Common myeloid progenitor, CD34-positive (primary cell): ENCODE measurements at regions of chr15 and their contacts with region 1.

Region 1: GRCh38 chr15:45205192-45205591 is 17.4 kb upstream of the SHF start:
- DNase-seq: peak; percentile 69 to 82 (median 77)
- H3K4me3 ChIP-seq: no peak overlapping the region
- H3K27ac ChIP-seq: no peak overlapping the region
- H3K4me1 ChIP-seq: peaks cover 4 to 20% (median 10%) of the 10 kb centered on the region in 4 experiments
- H3K27me3 ChIP-seq: no peaks in the 10 kb centered on the region

Region 2: GRCh38 chr15:44636976-44637375 is 568.2 kb before region 1 on chr15:
- CTCF ChIA-PET with region 1: no interaction called
- POLR2A ChIA-PET with region 1: no interaction called
- DNase-seq: peak in 2 of 3 donors; percentile 5 to 15
- H3K4me3 ChIP-seq: no peak overlapping the region
- H3K27ac ChIP-seq: no peak overlapping the region
- H3K4me1 ChIP-seq: no peaks in the 10 kb centered on the region
- H3K27me3 ChIP-seq: no peaks in the 10 kb centered on the region

Region 3: GRCh38 chr15:45134682-45135604 is 70.2 kb before region 1 on chr15:
- CTCF ChIA-PET with region 1: no interaction called
- POLR2A ChIA-PET with region 1: no interaction called
- DNase-seq: peak in 2 of 3 donors; percentile 40 to 44
- H3K4me3 ChIP-seq: peak overlapping the region in 2 of 7 experiments; percentile 15 to 33
- H3K27ac ChIP-seq: no peak overlapping the region
- H3K4me1 ChIP-seq: peaks cover 0 to 7% (median 3%) of the 10 kb centered on the region in 4 experiments
- H3K27me3 ChIP-seq: peaks cover 0 to 72% (median 40%) of the 10 kb centered on the region in 5 experiments

Region 4: DNA sequence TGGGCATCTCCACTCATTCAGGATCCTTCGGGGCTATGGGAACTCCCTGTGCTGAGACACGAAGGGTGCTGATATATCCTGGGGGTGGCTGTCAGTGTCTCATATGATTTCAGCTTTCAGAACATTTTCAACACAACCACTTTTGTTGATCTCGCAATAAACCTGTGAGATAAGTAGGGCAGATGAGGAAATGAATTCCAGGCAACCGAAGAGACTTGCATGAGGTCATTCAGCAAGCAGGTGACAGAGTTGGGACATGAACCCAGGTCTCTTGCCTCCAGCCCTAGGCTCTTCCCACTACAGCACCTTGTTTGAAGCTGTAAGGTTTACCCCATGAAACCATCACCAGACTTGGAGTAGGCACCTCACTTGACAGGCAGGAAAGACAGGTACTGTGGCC is 58.8 kb before region 1 on chr15:
- CTCF ChIA-PET with region 1: no interaction called
- POLR2A ChIA-PET with region 1: no interaction called
- DNase-seq: no peak
- H3K4me3 ChIP-seq: no peak overlapping the region
- H3K27ac ChIP-seq: no peak overlapping the region
- H3K4me1 ChIP-seq: peaks cover 0 to 6% (median 4%) of the 10 kb centered on the region in 4 experiments
- H3K27me3 ChIP-seq: peaks cover 0 to 5% (median 0%) of the 10 kb centered on the region in 5 experiments

Region 5: GRCh38 chr15:45179221-45179985 is 25.8 kb before region 1 on chr15:
- CTCF ChIA-PET with region 1: interaction called, 17 read pairs
- POLR2A ChIA-PET with region 1: interaction called, 4 read pairs
- DNase-seq: no peak
- H3K4me3 ChIP-seq: peak overlapping the region in 1 of 7 experiments; percentile 17
- H3K27ac ChIP-seq: no peak overlapping the region
- H3K4me1 ChIP-seq: peaks cover 17 to 57% (median 57%) of the 10 kb centered on the region in 4 experiments
- H3K27me3 ChIP-seq: no peaks in the 10 kb centered on the region

Region 6: GRCh38 chr15:45221967-45222366 is 16.8 kb after region 1 on chr15:
- CTCF ChIA-PET with region 1: interaction called, 10 read pairs
- POLR2A ChIA-PET with region 1: no interaction called
- DNase-seq: no peak
- H3K4me3 ChIP-seq: no peak overlapping the region
- H3K27ac ChIP-seq: no peak overlapping the region
- H3K4me1 ChIP-seq: no peaks in the 10 kb centered on the region
- H3K27me3 ChIP-seq: peaks cover 0 to 4% (median 2%) of the 10 kb centered on the region in 5 experiments

Region 7: GRCh38 chr15:45268135-45268534 is 62.9 kb after region 1 on chr15:
- CTCF ChIA-PET with region 1: interaction called, 10 read pairs
- POLR2A ChIA-PET with region 1: no interaction called
- DNase-seq: peak; percentile 14 to 37 (median 24)
- H3K4me3 ChIP-seq: no peak overlapping the region
- H3K27ac ChIP-seq: no peak overlapping the region
- H3K4me1 ChIP-seq: no peaks in the 10 kb centered on the region
- H3K27me3 ChIP-seq: no peaks in the 10 kb centered on the region

Region 8: GRCh38 chr15:45402162-45402954 is 197.2 kb after region 1 on chr15:
- CTCF ChIA-PET with region 1: interaction called, 23 read pairs
- POLR2A ChIA-PET with region 1: no interaction called
- DNase-seq: peak; percentile 98 to 100 (median 99)
- H3K4me3 ChIP-seq: peak overlapping the region; percentile 75 to 97 (median 90)
- H3K27ac ChIP-seq: peak overlapping the region; percentile 77 to 88
- H3K4me1 ChIP-seq: peaks cover 9 to 33% (median 23%) of the 10 kb centered on the region in 4 experiments
- H3K27me3 ChIP-seq: no peaks in the 10 kb centered on the region